ENCODE measurements at regions of chr4 and their contacts with region 1.

Region 1: GRCh38 chr4:118772081-118772766 is 63.7 kb downstream of the SEC24D start:
- DNase-seq: peak; percentile 30
- H3K4me3 ChIP-seq: no peak overlapping the region
- H3K27ac ChIP-seq: no peak overlapping the region
- H3K4me1 ChIP-seq: peaks cover 39% of the 10 kb centered on the region
- H3K27me3 ChIP-seq: no peaks in the 10 kb centered on the region
- CTCF ChIP-seq: peak; percentile 50 to 54

Region 2: DNA sequence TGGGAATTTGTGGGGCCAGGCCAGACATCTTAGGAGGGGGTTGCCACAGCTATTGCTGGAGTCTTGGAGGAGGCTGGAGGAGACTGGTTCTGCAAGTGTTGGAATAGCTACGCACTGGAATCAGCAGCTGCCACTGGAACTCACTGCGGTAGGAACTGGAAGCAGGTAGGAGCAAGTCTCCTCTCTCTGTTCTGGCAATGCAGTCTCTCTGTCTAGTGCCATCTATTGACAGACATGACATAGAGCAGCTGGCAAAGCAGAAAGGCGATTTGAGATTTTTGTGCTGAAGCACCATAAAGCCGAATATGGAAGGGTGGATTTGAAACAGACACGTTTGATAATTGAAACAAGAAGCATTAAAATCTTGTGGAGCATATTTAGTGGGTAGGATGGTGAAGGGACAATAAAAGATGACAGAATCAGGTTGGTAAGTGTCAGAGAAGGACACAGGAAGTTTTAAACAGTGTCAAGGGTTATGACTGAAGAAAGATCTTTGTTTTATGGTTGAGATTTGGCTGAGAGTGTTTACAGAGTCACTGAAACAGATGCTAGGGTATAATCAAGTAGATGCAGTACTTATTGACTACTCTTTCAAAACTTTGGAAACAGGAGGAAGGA is 93.0 kb after region 1 on chr4:
- CTCF ChIA-PET with region 1: interaction called, 5 read pairs
- dilution Hi-C with region 1: no loop called
- in situ Hi-C with region 1: no loop called
- intact Hi-C with region 1: loop called (anchors 1 kb)
- DNase-seq: peak; percentile 78
- H3K4me3 ChIP-seq: no peak overlapping the region
- H3K27ac ChIP-seq: no peak overlapping the region
- H3K4me1 ChIP-seq: peaks cover 3% of the 10 kb centered on the region
- H3K27me3 ChIP-seq: no peaks in the 10 kb centered on the region
- CTCF ChIP-seq: peak; percentile 89 to 90

Region 3: GRCh38 chr4:118954246-118954645 is 182.0 kb after region 1 on chr4:
- CTCF ChIA-PET with region 1: no interaction called
- dilution Hi-C with region 1: no loop called
- in situ Hi-C with region 1: loop called in 1 of 2 experiments (anchors 10 kb)
- intact Hi-C with region 1: no loop called
- DNase-seq: no peak
- H3K4me3 ChIP-seq: no peak overlapping the region
- H3K27ac ChIP-seq: no peak overlapping the region
- H3K4me1 ChIP-seq: no peaks in the 10 kb centered on the region
- H3K27me3 ChIP-seq: no peaks in the 10 kb centered on the region
- CTCF ChIP-seq: peak; percentile 12 to 47

Region 4: DNA sequence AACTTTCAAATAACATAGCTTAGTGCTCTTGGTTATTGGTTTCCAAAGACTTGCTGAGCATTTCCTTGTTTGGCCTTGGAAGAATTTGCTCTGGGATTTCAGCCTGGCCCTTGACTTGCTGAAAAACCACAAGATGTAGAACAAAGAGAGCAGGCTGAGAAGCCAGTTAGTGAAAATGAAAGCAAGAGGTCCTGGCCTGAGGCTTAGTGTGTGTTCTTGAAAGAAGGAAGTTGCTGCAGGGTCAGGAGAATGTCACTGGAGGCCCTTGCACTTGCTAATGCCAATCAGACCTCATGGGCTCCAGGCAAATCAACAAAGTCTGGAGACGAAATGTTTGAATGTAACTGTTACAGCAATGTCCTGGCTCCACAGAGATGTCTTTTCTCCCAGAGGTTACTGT is 195.8 kb after region 1 on chr4:
- CTCF ChIA-PET with region 1: no interaction called
- dilution Hi-C with region 1: no loop called
- in situ Hi-C with region 1: no loop called
- intact Hi-C with region 1: loop called (anchors 1 kb)
- DNase-seq: peak; percentile 48
- H3K4me3 ChIP-seq: no peak overlapping the region
- H3K27ac ChIP-seq: no peak overlapping the region
- H3K4me1 ChIP-seq: peaks cover 20% of the 10 kb centered on the region
- H3K27me3 ChIP-seq: no peaks in the 10 kb centered on the region
- CTCF ChIP-seq: no peak